ENCODE measurements at regions of chr15 and their contacts with region 1.

Region 1: GRCh38 chr15:65792130-65792987 is at the start of gene DENND4A:
- DNase-seq: peak; percentile 94 to 98 (median 97)
- H3K4me3 ChIP-seq: peak within 1 kb of the TSS; percentile 48 to 95 (median 85)
- H3K27ac ChIP-seq: peak within 1 kb of the TSS; percentile 44 to 99 (median 97)
- H3K27me3 ChIP-seq: no peaks in the 10 kb centered on the region
- CTCF ChIP-seq: peak in 17 of 56 donors; percentile 2 to 50 (median 26)
- total RNA-seq, gene DENND4A: 52.0 to 89.8 (median 72.2) TPM

Region 2: GRCh38 chr15:64702816-64703646 is 1089.3 kb before region 1 on chr15:
- intact Hi-C with region 1: no loop called
- DNase-seq: peak; percentile 96 to 99 (median 98)
- H3K4me3 ChIP-seq: peak overlapping the region; percentile 51 to 98 (median 88)
- H3K27ac ChIP-seq: peak overlapping the region; percentile 63 to 99 (median 97)
- H3K27me3 ChIP-seq: no peaks in the 10 kb centered on the region
- CTCF ChIP-seq: peak in 29 of 56 donors; percentile 6 to 50 (median 22)

Region 3: GRCh38 chr15:65869127-65869953 is 77.0 kb after region 1 on chr15 and contains the start of gene RAB11A:
- intact Hi-C with region 1: loop called (anchors 1 to 2 kb)
- DNase-seq: peak; percentile 92 to 98 (median 96)
- H3K4me3 ChIP-seq: peak within 1 kb of the TSS; percentile 55 to 100 (median 95)
- H3K27ac ChIP-seq: peak within 1 kb of the TSS; percentile 69 to 100 (median 97)
- H3K27me3 ChIP-seq: no peaks in the 10 kb centered on the region
- CTCF ChIP-seq: peak in 54 of 56 donors; percentile 32 to 81 (median 58)
- total RNA-seq, gene RAB11A: 88.8 to 241 (median 186) TPM